ENCODE measurements at regions of chr12 and their contacts with region 1.

Region 1: DNA sequence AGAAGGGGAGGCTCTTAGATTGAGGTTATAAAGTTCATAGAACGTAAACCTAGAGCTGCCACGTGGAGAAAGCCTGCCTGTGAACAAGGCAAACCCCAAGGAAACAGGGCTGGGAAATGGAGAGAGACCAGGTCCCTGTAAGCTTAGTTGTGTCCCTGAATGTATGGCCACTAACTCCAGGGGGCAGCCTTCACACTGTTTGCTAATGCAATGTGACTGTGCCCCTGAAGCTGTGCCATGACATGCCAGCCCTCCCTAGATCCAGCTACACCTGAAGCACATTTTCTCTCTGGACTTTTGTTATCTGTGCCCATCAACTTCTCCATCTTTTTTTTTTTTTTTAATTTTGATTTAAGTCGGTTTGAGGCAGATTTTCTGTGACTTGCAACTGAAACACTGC is 60.6 kb upstream of the TMCC3 start:
- DNase-seq: peak; percentile 29
- H3K4me3 ChIP-seq: no peak overlapping the region
- H3K27ac ChIP-seq: no peak overlapping the region
- H3K4me1 ChIP-seq: peaks cover 14% of the 10 kb centered on the region
- H3K27me3 ChIP-seq: no peaks in the 10 kb centered on the region
- CTCF ChIP-seq: peak; percentile 44 to 47
- POLR2A ChIP-seq: no peak

Region 2: DNA sequence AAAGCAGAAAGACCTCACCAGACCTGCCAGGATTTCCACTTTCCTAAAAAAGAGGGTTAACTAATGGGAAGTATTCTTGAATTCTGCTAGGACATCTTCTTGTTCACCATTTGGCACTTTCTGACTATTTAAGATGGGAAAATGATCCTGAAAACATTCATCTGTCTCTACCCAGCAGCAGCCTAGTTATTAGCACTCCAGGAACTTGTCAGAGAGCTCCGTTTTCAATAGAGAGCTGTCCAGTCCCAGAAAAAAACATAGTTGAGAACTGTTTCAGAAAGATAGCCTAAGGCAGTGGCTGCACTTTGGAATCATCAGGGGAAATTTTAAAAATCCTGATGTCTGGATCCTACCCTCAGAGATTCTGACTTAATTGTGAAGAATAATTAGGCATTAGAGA is 229.2 kb before region 1 on chr12:
- CTCF ChIA-PET with region 1: no interaction called
- POLR2A ChIA-PET with region 1: no interaction called
- dilution Hi-C with region 1: no loop called
- intact Hi-C with region 1: no loop called
- DNase-seq: no peak
- H3K4me3 ChIP-seq: no peak overlapping the region
- H3K27ac ChIP-seq: no peak overlapping the region
- H3K4me1 ChIP-seq: no peaks in the 10 kb centered on the region
- H3K27me3 ChIP-seq: peaks cover 3 to 4% of the 10 kb centered on the region in 2 experiments
- CTCF ChIP-seq: no peak
- POLR2A ChIP-seq: no peak

Region 3: GRCh38 chr12:94593822-94594442 is 117.0 kb before region 1 on chr12:
- CTCF ChIA-PET with region 1: no interaction called
- POLR2A ChIA-PET with region 1: no interaction called
- dilution Hi-C with region 1: no loop called
- intact Hi-C with region 1: loop called (anchors 2 kb)
- DNase-seq: no peak
- H3K4me3 ChIP-seq: no peak overlapping the region
- H3K27ac ChIP-seq: peak overlapping the region; percentile 0
- H3K4me1 ChIP-seq: peaks cover 57% of the 10 kb centered on the region
- H3K27me3 ChIP-seq: no peaks in the 10 kb centered on the region
- CTCF ChIP-seq: no peak
- POLR2A ChIP-seq: no peak

Region 4: GRCh38 chr12:94649349-94650142 is 61.4 kb before region 1 on chr12:
- CTCF ChIA-PET with region 1: interaction called, 4 read pairs
- POLR2A ChIA-PET with region 1: no interaction called
- dilution Hi-C with region 1: no loop called
- intact Hi-C with region 1: loop called (anchors 1 kb)
- DNase-seq: peak; percentile 64
- H3K4me3 ChIP-seq: peak overlapping the region; percentile 52 to 96 (median 87)
- H3K27ac ChIP-seq: peak overlapping the region; percentile 85
- H3K4me1 ChIP-seq: peaks cover 28% of the 10 kb centered on the region
- H3K27me3 ChIP-seq: no peaks in the 10 kb centered on the region
- CTCF ChIP-seq: peak; percentile 29 to 43
- POLR2A ChIP-seq: no peak

Region 5: GRCh38 chr12:94689002-94689645 is 21.8 kb before region 1 on chr12:
- CTCF ChIA-PET with region 1: interaction called, 5 read pairs
- POLR2A ChIA-PET with region 1: no interaction called
- dilution Hi-C with region 1: no loop called
- intact Hi-C with region 1: loop called (anchors 1 kb)
- DNase-seq: peak; percentile 74
- H3K4me3 ChIP-seq: no peak overlapping the region
- H3K27ac ChIP-seq: peak overlapping the region; percentile 54
- H3K4me1 ChIP-seq: peaks cover 20% of the 10 kb centered on the region
- H3K27me3 ChIP-seq: no peaks in the 10 kb centered on the region
- CTCF ChIP-seq: no peak
- POLR2A ChIP-seq: no peak

Region 6: GRCh38 chr12:94762259-94762942 is 51.5 kb after region 1 on chr12:
- CTCF ChIA-PET with region 1: interaction called, 20 read pairs
- POLR2A ChIA-PET with region 1: no interaction called
- dilution Hi-C with region 1: no loop called
- intact Hi-C with region 1: loop called (anchors 1 kb)
- DNase-seq: no peak
- H3K4me3 ChIP-seq: no peak overlapping the region
- H3K27ac ChIP-seq: peak overlapping the region; percentile 89
- H3K4me1 ChIP-seq: peaks cover 9% of the 10 kb centered on the region
- H3K27me3 ChIP-seq: no peaks in the 10 kb centered on the region
- CTCF ChIP-seq: no peak
- POLR2A ChIP-seq: no peak

Region 7: DNA sequence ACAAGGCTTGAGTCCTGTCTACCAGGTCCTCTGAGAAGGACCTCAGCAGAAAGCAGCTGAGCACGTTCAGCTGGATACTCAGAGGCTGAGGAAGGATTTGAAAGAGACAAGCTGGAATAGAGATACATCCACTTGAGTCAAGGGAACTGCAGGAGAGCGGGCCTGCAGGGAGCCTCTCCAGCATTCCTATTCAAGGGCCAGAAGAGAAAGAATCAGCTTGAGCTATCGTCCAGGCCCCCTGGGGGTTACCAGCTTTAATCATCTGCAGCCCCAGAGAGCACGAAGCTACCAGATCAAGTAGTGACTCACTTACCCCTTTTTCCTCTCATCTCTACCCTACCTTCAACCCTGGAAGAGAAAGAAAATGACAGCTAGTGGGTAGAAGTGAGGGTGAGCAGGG is 211.6 kb after region 1 on chr12:
- CTCF ChIA-PET with region 1: no interaction called
- POLR2A ChIA-PET with region 1: no interaction called
- dilution Hi-C with region 1: no loop called
- intact Hi-C with region 1: no loop called
- DNase-seq: no peak
- H3K4me3 ChIP-seq: no peak overlapping the region
- H3K27ac ChIP-seq: no peak overlapping the region
- H3K4me1 ChIP-seq: no peaks in the 10 kb centered on the region
- H3K27me3 ChIP-seq: no peaks in the 10 kb centered on the region
- CTCF ChIP-seq: no peak
- POLR2A ChIP-seq: no peak

Region 8: GRCh38 chr12:95336390-95337067 is 625.6 kb after region 1 on chr12:
- CTCF ChIA-PET with region 1: no interaction called
- POLR2A ChIA-PET with region 1: no interaction called
- dilution Hi-C with region 1: no loop called
- intact Hi-C with region 1: loop called (anchors 1 kb)
- DNase-seq: peak; percentile 91
- H3K4me3 ChIP-seq: peak overlapping the region in 1 of 3 experiments; percentile 27
- H3K27ac ChIP-seq: peak overlapping the region; percentile 50
- H3K4me1 ChIP-seq: peaks cover 11% of the 10 kb centered on the region
- H3K27me3 ChIP-seq: no peaks in the 10 kb centered on the region
- CTCF ChIP-seq: peak; percentile 93 to 98
- POLR2A ChIP-seq: no peak

Measured in endothelial cell of umbilical vein (primary cell).